GM23248 (cell line): ENCODE measurements at regions of chr5 and their contacts with region 1.

Region 1: GRCh38 chr5:171342362-171343111 is 33.5 kb downstream of the TLX3 start:
- DNase-seq: peak; percentile 84
- H3K4me3 ChIP-seq: no peak overlapping the region
- H3K27ac ChIP-seq: no peak overlapping the region
- H3K4me1 ChIP-seq: no peaks in the 10 kb centered on the region
- H3K27me3 ChIP-seq: no peaks in the 10 kb centered on the region

Region 2: DNA sequence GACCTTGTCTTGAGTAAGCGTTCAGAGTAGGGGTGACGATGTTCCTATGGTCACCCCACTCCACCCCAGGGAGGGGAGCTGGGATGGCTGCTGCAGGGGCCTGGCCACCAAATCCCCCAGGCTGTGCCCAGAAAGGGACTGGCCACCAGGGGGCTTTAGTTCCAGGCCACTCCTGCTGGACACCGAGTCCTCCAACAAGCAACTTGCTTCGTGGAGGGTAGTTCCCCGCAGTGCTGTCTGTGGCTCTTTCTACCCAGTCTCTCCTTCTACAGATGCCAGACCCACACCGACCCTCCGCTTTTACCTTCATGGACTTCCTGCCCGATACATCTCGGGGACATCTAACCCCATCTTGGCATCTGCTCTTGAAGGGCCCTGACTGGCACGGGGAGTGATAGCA is 594.7 kb before region 1 on chr5:
- in situ Hi-C with region 1: loop called (anchors 10 kb)
- DNase-seq: peak; percentile 10
- H3K4me3 ChIP-seq: no peak overlapping the region
- H3K27ac ChIP-seq: no peak overlapping the region
- H3K4me1 ChIP-seq: no peaks in the 10 kb centered on the region; the same call in 1 of the 2 replicates
- H3K27me3 ChIP-seq: peaks cover 24% of the 10 kb centered on the region; the same call in 1 of the 2 replicates

Region 3: GRCh38 chr5:171534043-171534895 is 191.7 kb after region 1 on chr5:
- in situ Hi-C with region 1: no loop called
- DNase-seq: no peak
- H3K4me3 ChIP-seq: no peak overlapping the region
- H3K27ac ChIP-seq: no peak overlapping the region
- H3K4me1 ChIP-seq: peaks cover 5% of the 10 kb centered on the region; the same call in 1 of the 2 replicates
- H3K27me3 ChIP-seq: peaks cover 4% of the 10 kb centered on the region; the same call in 1 of the 2 replicates